AG04450 (cell line): ENCODE measurements at regions of chr2 and their contacts with region 1.

Region 1: DNA sequence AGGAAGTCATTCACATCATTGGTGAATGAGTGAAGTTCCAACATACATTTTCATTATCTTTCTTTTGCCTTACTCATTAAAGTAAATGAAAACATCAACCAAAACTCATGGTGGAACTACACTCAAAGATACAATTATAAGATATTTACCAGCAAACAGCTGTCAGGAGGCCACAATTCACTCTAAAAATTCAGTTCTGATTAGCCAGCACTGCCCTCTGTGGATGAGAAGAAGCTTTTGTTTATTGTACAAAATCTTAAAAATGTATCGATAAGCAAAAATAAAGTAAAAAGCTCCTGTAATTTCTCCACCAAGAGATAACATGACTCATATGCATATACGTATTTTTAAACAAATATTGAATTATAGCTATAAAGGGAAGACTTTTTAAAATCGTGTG is 73.5 kb upstream of the RAPGEF4 start:
- DNase-seq: no peak
- H3K4me3 ChIP-seq: no peak overlapping the region
- H3K27ac ChIP-seq: no peak overlapping the region
- H3K27me3 ChIP-seq: no peaks in the 10 kb centered on the region
- CTCF ChIP-seq: 0 out of 2 replicates have a peak, but pooled peaks have one; percentile 20

Region 2: GRCh38 chr2:172674034-172674967 is 12.2 kb after region 1 on chr2:
- CTCF ChIA-PET with region 1: interaction called, 12 read pairs
- POLR2A ChIA-PET with region 1: no interaction called
- DNase-seq: no peak
- H3K4me3 ChIP-seq: no peak overlapping the region
- H3K27ac ChIP-seq: no peak overlapping the region
- H3K27me3 ChIP-seq: no peaks in the 10 kb centered on the region
- CTCF ChIP-seq: peak; percentile 54

Region 3: GRCh38 chr2:172710584-172711024 is 48.5 kb after region 1 on chr2:
- CTCF ChIA-PET with region 1: no interaction called
- POLR2A ChIA-PET with region 1: no interaction called
- DNase-seq: peak; percentile 74
- H3K4me3 ChIP-seq: no peak overlapping the region
- H3K27ac ChIP-seq: no peak overlapping the region
- H3K27me3 ChIP-seq: no peaks in the 10 kb centered on the region
- CTCF ChIP-seq: peak; percentile 44